BJ (cell line): ENCODE measurements at regions of chr7 and their contacts with region 1.

Region 1: DNA sequence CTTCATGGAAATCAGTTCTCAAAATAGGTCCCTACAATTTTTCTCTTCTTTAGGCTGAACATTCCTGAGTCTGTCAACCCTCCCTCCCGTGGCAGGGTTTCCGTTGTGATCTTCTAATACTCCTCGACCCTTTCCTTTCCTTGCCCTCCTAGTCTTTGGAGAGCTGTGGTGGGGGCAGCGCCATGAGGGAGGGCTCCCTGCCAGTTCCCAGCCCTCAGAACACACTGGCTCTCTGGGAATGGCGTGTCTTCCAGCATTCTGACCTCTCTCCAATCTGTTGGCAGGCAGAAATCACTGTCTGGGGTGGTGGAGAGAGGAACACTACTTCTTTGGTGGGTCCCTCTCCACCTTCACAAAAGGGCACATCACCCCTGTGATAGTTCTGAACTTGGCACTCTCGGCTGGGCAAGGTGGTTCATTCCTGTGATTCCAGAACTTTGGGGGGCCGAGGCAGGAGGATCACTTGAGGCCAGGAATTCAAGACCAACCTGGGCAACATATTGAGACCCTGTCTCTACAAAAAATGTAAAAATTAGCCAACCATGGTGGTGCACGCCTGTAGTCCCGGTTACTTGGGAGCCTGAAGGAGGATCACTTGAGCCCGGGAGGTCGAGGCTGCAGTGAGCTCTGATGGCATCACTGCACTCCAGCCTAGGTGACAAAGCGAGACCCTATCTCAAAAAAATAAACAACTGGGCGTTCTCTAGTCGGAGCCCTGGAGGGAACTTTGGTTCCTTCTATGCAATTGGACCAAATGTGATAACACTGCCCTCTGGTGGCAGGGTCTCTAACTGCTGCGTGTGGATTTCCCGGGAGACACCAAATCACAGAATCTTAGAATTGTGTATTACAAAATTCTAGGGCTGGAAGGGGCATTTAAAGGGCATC is 13.1 kb upstream of the ARPC1A start:
- DNase-seq: no peak
- H3K4me3 ChIP-seq: no peak overlapping the region
- H3K27me3 ChIP-seq: no peaks in the 10 kb centered on the region
- CTCF ChIP-seq: peak; percentile 81

Region 2: DNA sequence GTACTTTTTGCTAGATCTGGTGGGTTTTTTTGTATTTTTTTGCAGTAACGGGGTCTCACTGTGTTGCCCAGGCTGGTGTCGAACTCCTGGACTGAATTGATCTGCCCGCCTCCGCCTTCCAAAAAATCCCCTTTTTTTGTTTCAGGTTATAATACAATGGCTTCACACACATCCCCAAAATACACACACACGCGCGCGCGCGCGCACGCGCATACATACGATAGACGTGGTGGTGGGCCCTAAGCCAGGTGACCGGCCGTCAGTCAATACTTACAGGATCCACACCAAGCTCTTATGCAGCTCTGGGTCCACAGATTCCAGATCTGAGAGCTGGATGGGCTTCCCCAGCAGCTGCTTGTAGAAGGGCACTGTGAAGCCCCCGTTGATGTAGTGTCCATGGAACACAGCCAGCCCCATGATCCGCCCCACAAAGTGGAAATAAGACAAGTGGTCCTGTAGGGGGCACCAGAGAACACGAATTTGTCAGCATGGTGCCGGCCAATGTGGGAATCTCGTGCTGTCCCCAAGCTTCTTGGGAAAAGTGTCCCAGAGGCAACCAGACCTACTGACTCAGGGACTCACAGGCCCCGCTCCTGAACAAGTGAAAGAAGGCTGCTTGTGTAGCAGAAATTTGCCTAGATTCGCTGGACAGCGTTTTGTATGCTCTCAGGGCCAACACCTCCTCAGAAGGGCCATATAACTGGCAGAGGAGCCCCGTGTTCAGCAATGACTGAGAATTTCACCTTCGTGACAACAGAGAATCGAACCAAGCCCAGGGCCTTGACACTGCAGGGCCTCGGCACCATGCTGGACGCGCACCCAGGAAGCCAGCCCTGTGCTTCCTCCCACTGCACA is 272.2 kb before region 1 on chr7:
- CTCF ChIA-PET with region 1: interaction called, 128 read pairs
- POLR2A ChIA-PET with region 1: no interaction called
- DNase-seq: peak; percentile 30
- H3K4me3 ChIP-seq: no peak overlapping the region
- H3K27me3 ChIP-seq: no peaks in the 10 kb centered on the region
- CTCF ChIP-seq: peak; percentile 70

Region 3: DNA sequence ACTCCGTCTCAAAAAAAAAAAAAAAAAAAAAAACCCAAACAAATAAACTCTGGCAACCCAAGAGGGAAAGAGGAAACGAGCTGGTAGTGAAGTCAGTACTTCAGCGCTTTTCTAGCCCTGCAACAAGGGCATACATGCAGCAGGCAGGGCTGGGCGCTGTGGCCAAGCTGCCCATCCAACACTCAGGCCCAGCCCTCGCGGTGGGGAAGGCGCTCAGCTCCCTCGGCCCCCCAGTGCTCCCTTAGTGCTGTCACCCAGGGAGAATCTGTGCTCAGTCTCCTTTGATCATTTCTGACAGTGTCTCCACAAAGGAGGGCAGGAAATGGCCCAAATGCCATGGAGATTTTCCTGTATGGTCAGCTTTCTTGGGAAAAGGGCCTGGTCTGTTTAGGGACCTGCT is 265.8 kb before region 1 on chr7:
- CTCF ChIA-PET with region 1: interaction called, 128 read pairs
- POLR2A ChIA-PET with region 1: no interaction called
- DNase-seq: no peak
- H3K4me3 ChIP-seq: no peak overlapping the region
- H3K27me3 ChIP-seq: no peaks in the 10 kb centered on the region
- CTCF ChIP-seq: no peak